Activated CD4-positive, alpha-beta memory T cell treated with anti-CD3 and anti-CD28 coated beads, Interleukin-2, amount 10 ng/mL, durations not matched to agents 7 days and 5 days (primary cell): ENCODE measurements at regions of chr17 and their contacts with region 1.

Region 1: DNA sequence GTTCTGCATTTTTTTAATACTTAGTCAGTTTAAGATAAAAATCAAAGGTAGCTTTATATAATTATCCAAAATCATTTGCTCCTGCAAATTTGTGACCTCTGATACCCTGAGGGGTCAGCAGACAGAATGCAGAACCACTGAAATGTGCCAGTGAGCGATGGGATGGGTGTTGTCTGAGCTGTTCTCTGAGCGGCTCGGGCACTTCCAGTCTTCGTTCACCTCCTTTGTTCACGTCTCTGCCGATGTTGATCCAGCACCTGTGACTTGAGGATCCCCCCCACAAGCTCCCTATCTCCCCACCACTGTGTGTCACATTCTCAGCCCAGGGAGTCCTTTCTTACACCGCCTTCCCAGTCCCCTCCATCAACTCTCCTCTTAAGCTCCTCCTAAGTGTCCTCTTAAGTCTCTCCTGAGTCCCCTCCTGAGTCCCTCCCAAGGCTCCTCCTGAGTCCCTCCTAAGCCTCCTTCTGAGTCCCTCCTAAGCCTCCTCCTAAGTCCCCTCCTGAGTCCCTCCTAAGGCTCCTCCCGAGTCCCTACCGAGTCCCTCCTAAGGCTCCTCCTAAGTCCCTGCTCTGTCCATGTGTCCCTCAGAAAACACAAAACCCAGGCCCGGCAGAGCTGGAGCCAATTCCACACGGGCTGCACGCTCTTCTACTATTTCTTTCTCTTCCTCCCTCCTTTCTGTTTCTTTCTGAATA is 47.5 kb downstream of the RNF213 start:
- DNase-seq: no peak
- H3K4me3 Mint-ChIP-seq: no peak overlapping the region
- H3K27ac Mint-ChIP-seq: peak overlapping the region; percentile 21
- H3K4me1 Mint-ChIP-seq: peaks cover 25% of the 10 kb centered on the region
- H3K27me3 Mint-ChIP-seq: no peaks in the 10 kb centered on the region

Region 2: DNA sequence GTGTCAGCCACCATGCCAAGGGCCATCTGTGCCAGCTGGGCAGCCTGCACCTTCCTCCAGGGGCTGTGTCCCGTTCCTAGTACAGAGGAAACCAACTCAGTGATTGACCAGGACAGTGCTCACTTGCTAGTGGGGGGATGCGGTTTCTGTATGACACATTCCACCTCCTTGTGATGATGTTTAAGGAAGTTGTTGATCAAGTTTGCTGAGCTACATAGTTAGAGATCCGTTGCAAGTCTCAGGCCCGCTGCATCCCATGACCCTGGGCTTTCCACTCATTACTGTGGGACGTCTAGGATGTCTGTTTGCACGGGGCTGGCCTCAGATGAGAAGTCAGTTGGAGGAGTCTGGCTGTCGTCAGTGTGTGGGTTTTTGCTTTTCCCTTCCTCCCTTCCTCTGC is 13.9 kb before region 1 on chr17:
- CTCF ChIA-PET with region 1: no interaction called
- POLR2A ChIA-PET with region 1: interaction called, 22 read pairs
- DNase-seq: no peak
- H3K4me3 Mint-ChIP-seq: no peak overlapping the region
- H3K27ac Mint-ChIP-seq: peak overlapping the region; percentile 40
- H3K4me1 Mint-ChIP-seq: peaks cover 44% of the 10 kb centered on the region
- H3K27me3 Mint-ChIP-seq: no peaks in the 10 kb centered on the region

Region 3: GRCh38 chr17:80426681-80427326 is 118.7 kb after region 1 on chr17:
- CTCF ChIA-PET with region 1: no interaction called
- POLR2A ChIA-PET with region 1: no interaction called
- DNase-seq: peak; percentile 88
- H3K4me3 Mint-ChIP-seq: no peak overlapping the region
- H3K27ac Mint-ChIP-seq: no peak overlapping the region
- H3K4me1 Mint-ChIP-seq: peaks cover 19% of the 10 kb centered on the region
- H3K27me3 Mint-ChIP-seq: peaks cover 2% of the 10 kb centered on the region